GM12878 (cell line): ENCODE measurements at regions of chr1 and their contacts with region 1.

Region 1: GRCh38 chr1:160332516-160332915 is 10.5 kb downstream of the COPA start:
- DNase-seq: no peak
- ATAC-seq: no peak
- H3K4me3 ChIP-seq: no peak overlapping the region
- H3K27ac ChIP-seq: no peak overlapping the region
- H3K4me1 ChIP-seq: no peaks in the 10 kb centered on the region
- H3K27me3 ChIP-seq: no peaks in the 10 kb centered on the region
- CTCF ChIP-seq: no peak
- EP300 ChIP-seq: no peak
- POLR2A ChIP-seq: no peak
- RAD21 ChIP-seq: no peak

Region 2: GRCh38 chr1:160149716-160150115 is 182.8 kb before region 1 on chr1:
- CTCF ChIA-PET with region 1: no interaction called
- POLR2A ChIA-PET with region 1: no interaction called
- RAD21 ChIA-PET with region 1: no interaction called
- SMC1A ChIA-PET with region 1: no interaction called
- in situ Hi-C with region 1: no loop called
- intact Hi-C with region 1: no loop called
- DNase-seq: no peak
- ATAC-seq: no peak
- H3K4me3 ChIP-seq: no peak overlapping the region
- H3K27ac ChIP-seq: no peak overlapping the region
- H3K4me1 ChIP-seq: no peaks in the 10 kb centered on the region
- H3K27me3 ChIP-seq: no peaks in the 10 kb centered on the region
- CTCF ChIP-seq: no peak
- EP300 ChIP-seq: no peak
- POLR2A ChIP-seq: no peak
- RAD21 ChIP-seq: no peak

Region 3: DNA sequence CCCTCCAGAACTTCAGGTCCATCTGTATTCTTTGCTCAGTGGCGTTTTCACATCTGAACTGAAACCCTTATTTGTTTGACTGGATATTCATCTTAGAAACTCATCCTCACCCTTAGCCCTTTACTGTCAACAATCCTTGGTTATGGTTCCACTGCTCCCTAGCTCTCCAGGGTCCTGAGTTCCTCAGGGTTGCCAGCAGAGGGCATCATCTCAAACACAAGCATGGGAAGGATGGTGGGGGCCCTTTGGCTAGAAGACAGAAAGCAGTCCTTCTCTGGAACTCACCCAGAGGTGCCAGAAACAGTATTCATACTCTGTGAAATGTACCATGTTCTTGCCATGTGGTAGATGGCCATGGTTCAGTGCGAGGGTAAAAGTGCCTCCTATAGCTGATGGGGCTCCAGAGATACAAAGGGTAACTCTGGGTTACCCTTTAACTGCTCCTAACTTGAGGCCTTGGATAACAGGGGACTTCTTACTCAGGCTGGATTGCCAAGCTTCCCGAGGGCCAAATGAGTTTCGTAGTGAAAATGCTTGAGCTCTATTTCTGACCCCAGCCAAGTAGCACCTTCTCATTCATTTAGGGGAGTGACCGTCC is 22.0 kb after region 1 on chr1:
- CTCF ChIA-PET with region 1: interaction called, 10 read pairs
- POLR2A ChIA-PET with region 1: interaction called, 5 read pairs
- RAD21 ChIA-PET with region 1: interaction called, 5 read pairs
- SMC1A ChIA-PET with region 1: interaction called, 3 read pairs
- in situ Hi-C with region 1: no loop called
- intact Hi-C with region 1: no loop called
- DNase-seq: no peak
- ATAC-seq: peak; percentile 82
- H3K4me3 ChIP-seq: no peak overlapping the region
- H3K27ac ChIP-seq: no peak overlapping the region
- H3K4me1 ChIP-seq: no peaks in the 10 kb centered on the region
- H3K27me3 ChIP-seq: no peaks in the 10 kb centered on the region
- CTCF ChIP-seq: peak; percentile 29 to 55 (median 55)
- EP300 ChIP-seq: no peak
- POLR2A ChIP-seq: no peak
- RAD21 ChIP-seq: peak; percentile 38; the same call in 1 of the 2 replicates